Naive thymus-derived CD4-positive, alpha-beta T cell (primary cell): ENCODE measurements at regions of chr3 and their contacts with region 1.

Region 1: GRCh38 chr3:169863458-169863899 is 6.3 kb downstream of the LRRC31 start:
- DNase-seq: peak; percentile 29 to 77 (median 67)
- ATAC-seq: peak; percentile 87
- H3K4me3 ChIP-seq: no peak overlapping the region
- H3K4me3 Mint-ChIP-seq: peak overlapping the region in 4 of 10 donors; percentile 3 to 58 (median 38)
- H3K27ac ChIP-seq: no peak overlapping the region
- H3K27ac Mint-ChIP-seq: peak overlapping the region in 6 of 9 donors; percentile 42 to 98 (median 52)
- H3K4me1 ChIP-seq: peaks cover 6 to 22% of the 10 kb centered on the region in 2 donors
- H3K4me1 Mint-ChIP-seq: peaks cover 19 to 38% (median 27%) of the 10 kb centered on the region in 7 donors
- H3K27me3 ChIP-seq: no peaks in the 10 kb centered on the region
- H3K27me3 Mint-ChIP-seq: peaks cover 0 to 14% (median 0%) of the 10 kb centered on the region in 5 donors

Region 2: GRCh38 chr3:169764452-169765274 is 98.8 kb before region 1 on chr3 and contains the start of gene TERC:
- CTCF ChIA-PET with region 1: interaction called, 4 read pairs
- POLR2A ChIA-PET with region 1: interaction called, 3 read pairs
- intact Hi-C with region 1: loop called (anchors 1 kb)
- DNase-seq: peak; percentile 72 to 96 (median 94)
- ATAC-seq: peak; percentile 91
- H3K4me3 ChIP-seq: peak within 1 kb of the TSS; percentile 88
- H3K4me3 Mint-ChIP-seq: peak within 1 kb of the TSS; percentile 89 to 99 (median 98)
- H3K27ac ChIP-seq: peak within 1 kb of the TSS; percentile 98
- H3K27ac Mint-ChIP-seq: peak within 1 kb of the TSS; percentile 96 to 100 (median 99)
- H3K4me1 ChIP-seq: peaks cover 11 to 18% of the 10 kb centered on the region in 2 donors
- H3K4me1 Mint-ChIP-seq: peaks cover 6 to 39% (median 33%) of the 10 kb centered on the region in 7 donors
- H3K27me3 ChIP-seq: no peaks in the 10 kb centered on the region
- H3K27me3 Mint-ChIP-seq: no peaks in the 10 kb centered on the region
- total RNA-seq, gene TERC: 4.0 to 19.4 (median 7.4) TPM

Region 3: DNA sequence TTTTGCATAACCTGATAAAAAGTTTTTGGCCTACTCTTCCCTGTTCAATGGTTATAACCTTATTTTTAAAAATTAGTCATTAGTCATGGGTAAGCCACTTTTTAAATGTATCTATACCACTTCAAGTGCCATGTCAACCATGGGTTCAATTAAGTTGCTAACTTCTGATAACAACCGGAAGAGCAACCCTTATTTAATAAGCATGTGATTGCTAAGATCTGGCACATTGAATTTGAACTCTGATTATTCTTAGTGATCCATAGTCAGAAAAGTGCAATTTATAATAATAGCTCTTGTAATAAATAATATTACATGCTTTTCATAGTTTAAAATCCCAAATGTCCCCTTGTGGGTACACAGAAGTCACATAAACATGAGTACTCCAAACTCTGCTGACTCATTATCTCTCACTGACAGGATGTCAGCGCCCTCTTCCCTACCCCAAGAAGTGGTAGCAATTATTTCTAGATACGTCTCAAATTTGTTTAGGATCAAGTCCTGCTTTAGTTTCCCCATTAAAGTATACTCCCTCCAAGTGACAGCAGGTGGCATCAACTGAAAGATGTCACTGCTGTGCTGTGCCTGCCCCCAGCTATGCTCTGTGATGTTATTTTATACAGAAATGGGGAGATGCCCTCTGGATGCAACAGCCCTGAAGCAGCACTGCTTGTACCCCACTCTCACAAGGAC is 66.5 kb after region 1 on chr3:
- CTCF ChIA-PET with region 1: interaction called, 5 read pairs
- POLR2A ChIA-PET with region 1: no interaction called
- intact Hi-C with region 1: loop called in 1 of 2 experiments (anchors 1 kb)
- DNase-seq: peak in 5 of 9 donors; percentile 7 to 24 (median 16)
- ATAC-seq: peak; percentile 68
- H3K4me3 ChIP-seq: no peak overlapping the region
- H3K4me3 Mint-ChIP-seq: no peak overlapping the region
- H3K27ac ChIP-seq: no peak overlapping the region
- H3K27ac Mint-ChIP-seq: no peak overlapping the region
- H3K4me1 ChIP-seq: no peaks in the 10 kb centered on the region
- H3K4me1 Mint-ChIP-seq: peaks cover 0 to 4% (median 0%) of the 10 kb centered on the region in 7 donors
- H3K27me3 ChIP-seq: no peaks in the 10 kb centered on the region
- H3K27me3 Mint-ChIP-seq: peaks cover 0 to 12% (median 4%) of the 10 kb centered on the region in 5 donors

Region 4: GRCh38 chr3:170021083-170021482 is 157.6 kb after region 1 on chr3:
- CTCF ChIA-PET with region 1: interaction called, 8 read pairs
- POLR2A ChIA-PET with region 1: interaction called, 3 read pairs
- intact Hi-C with region 1: loop called in 1 of 2 experiments (anchors 1 kb)
- DNase-seq: peak in 6 of 9 donors; percentile 21 to 48 (median 40)
- ATAC-seq: peak; percentile 61
- H3K4me3 ChIP-seq: no peak overlapping the region
- H3K4me3 Mint-ChIP-seq: peak overlapping the region in 7 of 10 donors; percentile 3 to 71 (median 42)
- H3K27ac ChIP-seq: no peak overlapping the region
- H3K27ac Mint-ChIP-seq: peak overlapping the region in 8 of 9 donors; percentile 18 to 92 (median 73)
- H3K4me1 ChIP-seq: peaks cover 0 to 9% of the 10 kb centered on the region in 2 donors
- H3K4me1 Mint-ChIP-seq: peaks cover 10 to 64% (median 30%) of the 10 kb centered on the region in 7 donors
- H3K27me3 ChIP-seq: no peaks in the 10 kb centered on the region
- H3K27me3 Mint-ChIP-seq: peaks cover 0 to 17% (median 0%) of the 10 kb centered on the region in 5 donors

Region 5: DNA sequence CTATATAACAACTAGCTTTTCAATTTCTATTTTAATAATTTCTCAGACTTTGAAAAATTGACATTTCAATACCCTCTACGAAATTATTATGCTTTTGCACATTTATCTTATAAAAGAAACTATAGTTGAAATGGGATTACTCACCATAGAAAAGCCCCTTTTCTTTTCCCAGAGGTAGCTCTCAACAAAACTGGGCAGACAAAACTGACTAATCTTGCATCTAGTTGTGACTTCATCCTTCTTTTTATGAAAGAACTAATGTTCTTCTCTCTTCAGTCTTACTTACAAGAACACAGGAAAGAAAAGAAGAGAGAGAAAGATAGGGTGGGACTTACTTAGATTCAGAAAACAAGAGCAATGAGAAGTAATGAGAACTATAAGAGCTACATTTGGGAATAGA is 235.3 kb after region 1 on chr3:
- CTCF ChIA-PET with region 1: interaction called, 4 read pairs
- POLR2A ChIA-PET with region 1: no interaction called
- intact Hi-C with region 1: loop called in 1 of 2 experiments (anchors 5 kb)
- DNase-seq: no peak
- ATAC-seq: no peak
- H3K4me3 ChIP-seq: no peak overlapping the region
- H3K4me3 Mint-ChIP-seq: no peak overlapping the region
- H3K27ac ChIP-seq: no peak overlapping the region
- H3K27ac Mint-ChIP-seq: peak overlapping the region in 6 of 9 donors; percentile 34 to 67 (median 54)
- H3K4me1 ChIP-seq: no peaks in the 10 kb centered on the region
- H3K4me1 Mint-ChIP-seq: peaks cover 2 to 34% (median 18%) of the 10 kb centered on the region in 7 donors
- H3K27me3 ChIP-seq: no peaks in the 10 kb centered on the region
- H3K27me3 Mint-ChIP-seq: no peaks in the 10 kb centered on the region

Region 6: DNA sequence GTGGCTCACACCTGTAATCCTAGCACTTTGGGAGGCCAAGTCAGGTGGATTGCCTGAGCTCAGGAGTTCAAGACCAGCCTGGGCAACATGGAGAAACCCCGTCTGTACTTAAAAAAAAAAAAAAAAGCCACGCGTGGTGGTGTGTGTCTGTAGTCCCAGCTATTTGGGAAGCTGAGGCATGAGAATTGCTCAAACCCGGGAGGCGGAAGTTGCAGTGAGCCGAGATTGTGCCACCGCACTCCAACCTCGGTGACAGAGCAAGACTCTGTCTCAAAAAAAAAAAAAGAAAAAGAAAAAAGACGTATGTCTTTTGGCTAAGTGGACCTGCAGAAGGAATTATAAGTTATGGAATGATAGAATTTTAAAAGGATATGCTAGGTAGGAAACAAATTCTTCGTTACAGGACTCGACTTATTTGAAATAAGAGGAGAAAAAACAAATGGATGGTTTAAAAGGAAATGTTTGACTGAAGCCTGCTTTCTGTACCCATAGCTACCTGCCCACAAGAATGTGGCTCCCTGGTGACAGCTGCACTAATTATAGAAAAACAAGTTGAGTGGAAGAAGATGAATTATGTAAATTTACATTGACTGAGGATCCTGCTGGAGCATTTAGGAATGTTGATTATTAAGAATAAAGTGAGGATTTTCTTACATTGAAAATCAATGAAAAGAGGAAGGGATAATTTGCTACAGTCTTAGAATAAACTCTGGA is 458.0 kb after region 1 on chr3:
- CTCF ChIA-PET with region 1: no interaction called
- POLR2A ChIA-PET with region 1: no interaction called
- intact Hi-C with region 1: no loop called
- DNase-seq: no peak
- ATAC-seq: no peak
- H3K4me3 ChIP-seq: no peak overlapping the region
- H3K4me3 Mint-ChIP-seq: no peak overlapping the region
- H3K27ac ChIP-seq: no peak overlapping the region
- H3K27ac Mint-ChIP-seq: peak overlapping the region in 2 of 9 donors; percentile 17 to 36
- H3K4me1 ChIP-seq: no peaks in the 10 kb centered on the region
- H3K4me1 Mint-ChIP-seq: peaks cover 0 to 2% (median 0%) of the 10 kb centered on the region in 7 donors
- H3K27me3 ChIP-seq: no peaks in the 10 kb centered on the region
- H3K27me3 Mint-ChIP-seq: peaks cover 0 to 16% (median 0%) of the 10 kb centered on the region in 5 donors

Region 7: GRCh38 chr3:170414202-170414663 is 550.8 kb after region 1 on chr3:
- CTCF ChIA-PET with region 1: no interaction called
- POLR2A ChIA-PET with region 1: no interaction called
- intact Hi-C with region 1: loop called (anchors 1 to 10 kb)
- DNase-seq: peak in 6 of 9 donors; percentile 25 to 58 (median 48)
- ATAC-seq: peak; percentile 75
- H3K4me3 ChIP-seq: no peak overlapping the region
- H3K4me3 Mint-ChIP-seq: no peak overlapping the region
- H3K27ac ChIP-seq: no peak overlapping the region
- H3K27ac Mint-ChIP-seq: no peak overlapping the region
- H3K4me1 ChIP-seq: peaks cover 4 to 7% of the 10 kb centered on the region in 2 donors
- H3K4me1 Mint-ChIP-seq: peaks cover 5 to 15% (median 7%) of the 10 kb centered on the region in 7 donors
- H3K27me3 ChIP-seq: peaks cover 0 to 8% of the 10 kb centered on the region in 2 donors
- H3K27me3 Mint-ChIP-seq: peaks cover 14 to 40% (median 17%) of the 10 kb centered on the region in 5 donors

Region 8: DNA sequence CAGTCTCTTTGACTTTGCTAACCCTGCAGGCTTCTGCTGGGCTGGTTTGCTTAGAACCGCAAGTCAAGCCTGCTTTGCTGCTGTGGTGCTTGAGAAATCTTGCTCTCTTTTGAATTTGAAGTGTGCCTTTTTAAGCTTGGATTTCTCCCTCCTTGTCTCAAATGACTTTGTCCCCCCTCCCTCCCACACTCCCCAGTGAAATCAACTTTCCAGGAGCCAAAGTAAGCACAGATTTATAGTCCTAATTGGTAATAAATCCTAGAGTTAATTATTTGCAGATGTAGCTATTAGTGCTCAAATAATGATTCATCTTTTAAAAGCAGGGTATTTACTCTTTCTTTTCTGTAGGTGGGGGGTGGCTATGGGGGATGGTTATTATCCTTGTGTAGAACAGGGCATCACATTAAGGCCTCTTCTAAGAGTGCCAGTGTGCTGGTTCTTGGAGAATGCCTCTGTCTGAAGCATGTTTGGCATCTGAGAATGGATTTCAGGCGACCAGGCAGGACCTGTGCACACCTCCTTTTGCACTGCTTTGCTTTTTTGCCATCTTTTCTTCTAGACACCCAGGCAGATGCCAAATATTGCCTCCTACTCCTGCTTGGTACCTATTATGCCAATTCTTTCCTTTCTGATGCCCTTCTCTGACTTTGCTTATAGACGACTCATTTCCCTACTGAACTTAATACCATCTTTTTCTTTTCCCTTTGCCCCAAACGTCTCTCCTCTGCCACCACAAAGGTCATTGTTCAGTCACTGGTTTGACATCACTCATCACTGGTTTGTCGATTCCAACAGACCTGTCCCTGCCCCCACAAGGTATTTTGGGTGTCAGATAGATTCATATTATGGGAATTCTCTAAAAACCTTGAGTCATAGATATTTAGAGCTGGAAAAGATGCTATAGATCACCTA is 605.9 kb after region 1 on chr3:
- CTCF ChIA-PET with region 1: no interaction called
- POLR2A ChIA-PET with region 1: no interaction called
- intact Hi-C with region 1: no loop called
- DNase-seq: no peak
- ATAC-seq: no peak
- H3K4me3 ChIP-seq: no peak overlapping the region
- H3K4me3 Mint-ChIP-seq: no peak overlapping the region
- H3K27ac ChIP-seq: no peak overlapping the region
- H3K27ac Mint-ChIP-seq: no peak overlapping the region
- H3K4me1 ChIP-seq: no peaks in the 10 kb centered on the region
- H3K4me1 Mint-ChIP-seq: no peaks in the 10 kb centered on the region
- H3K27me3 ChIP-seq: no peaks in the 10 kb centered on the region
- H3K27me3 Mint-ChIP-seq: peaks cover 15 to 41% (median 18%) of the 10 kb centered on the region in 5 donors